ENCODE measurements at regions of chrX and their contacts with region 1.

Region 1: DNA sequence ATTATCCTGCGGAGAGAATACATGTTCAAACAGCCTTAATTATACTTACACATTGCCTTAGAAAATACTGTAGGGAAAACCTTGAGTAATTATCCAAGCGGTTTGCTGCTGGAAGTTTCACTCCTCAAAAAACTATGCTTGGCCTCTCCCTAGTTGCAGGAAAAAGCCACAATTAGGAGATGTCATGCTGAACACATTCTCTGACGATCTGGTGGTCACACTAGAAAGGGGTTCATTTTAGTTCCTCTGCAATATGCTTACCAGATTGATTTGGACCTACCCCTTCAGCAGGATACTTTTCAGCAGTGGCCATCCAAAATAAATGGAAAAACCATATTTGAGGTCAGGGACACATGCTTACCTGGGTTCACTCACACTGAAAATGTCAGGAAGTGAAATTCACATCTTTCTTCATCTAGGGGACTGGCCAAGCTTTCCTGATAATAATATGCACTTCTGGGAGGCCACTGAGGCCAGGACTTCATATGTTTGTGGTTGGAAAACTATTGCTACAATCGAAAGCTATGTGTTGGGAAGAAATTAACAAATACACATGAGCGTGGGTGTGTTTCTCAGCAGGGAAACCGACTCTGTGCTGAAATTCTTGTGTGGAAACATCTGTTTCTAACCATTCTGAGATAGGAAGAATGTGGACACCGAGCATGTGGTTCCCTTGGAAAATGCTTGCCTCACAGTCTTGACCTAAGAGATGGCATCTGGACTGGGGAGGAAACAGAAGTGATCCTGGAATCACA is 68.8 kb downstream of the ATXN3L start:
- DNase-seq: no peak
- ATAC-seq: peak in 3 of 4 donors; percentile 36 to 57 (median 57)
- H3K4me3 ChIP-seq: no peak overlapping the region
- H3K27ac ChIP-seq: no peak overlapping the region
- H3K4me1 ChIP-seq: no peaks in the 10 kb centered on the region
- H3K27me3 ChIP-seq: no peaks in the 10 kb centered on the region
- CTCF ChIP-seq: no peak

Region 2: DNA sequence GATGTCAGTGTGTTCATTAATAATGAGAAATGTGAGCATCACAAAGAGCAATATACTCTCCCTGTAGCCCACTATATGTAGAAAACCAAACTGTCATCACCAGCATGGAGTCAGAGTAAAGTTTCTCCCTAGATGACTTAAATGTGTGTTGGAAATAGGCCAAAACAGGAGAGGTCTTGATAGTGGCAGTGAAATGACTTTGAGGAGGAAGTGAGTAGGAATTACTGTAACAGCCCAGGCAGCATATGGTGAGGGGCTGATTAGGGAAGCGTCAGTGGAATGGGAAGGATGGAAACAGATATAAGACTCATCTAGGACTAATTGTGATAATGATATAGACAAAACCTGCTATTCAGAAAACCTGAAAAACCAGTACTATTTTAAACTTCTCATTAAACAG is 15.1 kb before region 1 on chrX:
- intact Hi-C with region 1: loop called in 1 of 3 experiments (anchors 2 kb)
- DNase-seq: no peak
- ATAC-seq: no peak
- H3K4me3 ChIP-seq: no peak overlapping the region
- H3K27ac ChIP-seq: no peak overlapping the region
- H3K4me1 ChIP-seq: no peaks in the 10 kb centered on the region
- H3K27me3 ChIP-seq: peaks cover 0 to 3% (median 0%) of the 10 kb centered on the region in 4 donors
- CTCF ChIP-seq: no peak

Measured in pancreas (tissue), 10 donors.